Calu3 (cell line): ENCODE measurements at regions of chr12 and their contacts with region 1.

Region 1: GRCh38 chr12:108722992-108723766 is 8.1 kb downstream of the CORO1C start:
- DNase-seq: no peak
- H3K4me3 Mint-ChIP-seq: peak overlapping the region; percentile 57
- H3K27ac Mint-ChIP-seq: peak overlapping the region; percentile 96
- H3K4me1 Mint-ChIP-seq: peaks cover 75% of the 10 kb centered on the region
- H3K27me3 Mint-ChIP-seq: no peaks in the 10 kb centered on the region
- CTCF ChIP-seq: no peak

Region 2: GRCh38 chr12:108418164-108418890 is 304.9 kb before region 1 on chr12:
- CTCF ChIA-PET with region 1: no interaction called
- intact Hi-C with region 1: no loop called
- DNase-seq: no peak
- H3K4me3 Mint-ChIP-seq: no peak overlapping the region
- H3K27ac Mint-ChIP-seq: no peak overlapping the region
- H3K4me1 Mint-ChIP-seq: no peaks in the 10 kb centered on the region
- H3K27me3 Mint-ChIP-seq: peaks cover 22% of the 10 kb centered on the region
- CTCF ChIP-seq: no peak

Region 3: DNA sequence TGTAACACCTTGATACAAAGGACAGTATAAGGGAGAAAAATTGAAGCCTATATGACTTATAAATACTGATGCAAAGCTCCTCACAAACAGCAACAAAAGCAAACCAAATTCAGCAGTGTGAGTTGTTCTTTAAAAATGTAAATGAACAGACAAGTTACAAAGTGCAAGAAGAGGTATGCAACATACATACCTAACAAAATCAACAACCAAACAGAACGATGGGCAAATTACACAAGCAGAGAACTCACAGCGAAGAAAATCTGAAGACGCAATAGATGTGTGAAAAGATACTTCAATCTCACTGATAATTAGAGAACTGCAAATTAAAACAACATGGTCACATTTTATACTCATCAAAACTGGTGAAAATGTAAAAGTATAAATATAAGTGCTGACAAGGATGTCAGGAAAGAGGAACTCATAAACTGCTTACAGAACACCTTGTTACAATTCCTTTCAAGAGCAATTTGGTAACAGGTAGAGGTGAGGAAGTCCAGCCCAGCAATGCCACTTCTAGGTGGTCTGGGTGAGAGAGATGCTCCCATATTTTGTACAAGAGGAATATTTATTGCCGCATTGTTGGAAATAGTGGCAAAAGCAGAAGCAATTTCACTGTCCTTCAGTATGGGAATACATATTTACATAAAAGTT is 39.1 kb before region 1 on chr12:
- CTCF ChIA-PET with region 1: no interaction called
- intact Hi-C with region 1: loop called (anchors 5 kb)
- DNase-seq: no peak
- H3K4me3 Mint-ChIP-seq: no peak overlapping the region
- H3K27ac Mint-ChIP-seq: no peak overlapping the region
- H3K4me1 Mint-ChIP-seq: peaks cover 42% of the 10 kb centered on the region
- H3K27me3 Mint-ChIP-seq: no peaks in the 10 kb centered on the region
- CTCF ChIP-seq: no peak

Region 4: GRCh38 chr12:108691175-108691997 is 31.8 kb before region 1 on chr12:
- CTCF ChIA-PET with region 1: interaction called, 4 read pairs
- intact Hi-C with region 1: loop called (anchors 2 kb)
- DNase-seq: peak; percentile 86
- H3K4me3 Mint-ChIP-seq: peak overlapping the region; percentile 51
- H3K27ac Mint-ChIP-seq: peak overlapping the region; percentile 77
- H3K4me1 Mint-ChIP-seq: peaks cover 61% of the 10 kb centered on the region
- H3K27me3 Mint-ChIP-seq: no peaks in the 10 kb centered on the region
- CTCF ChIP-seq: peak; percentile 24

Region 5: DNA sequence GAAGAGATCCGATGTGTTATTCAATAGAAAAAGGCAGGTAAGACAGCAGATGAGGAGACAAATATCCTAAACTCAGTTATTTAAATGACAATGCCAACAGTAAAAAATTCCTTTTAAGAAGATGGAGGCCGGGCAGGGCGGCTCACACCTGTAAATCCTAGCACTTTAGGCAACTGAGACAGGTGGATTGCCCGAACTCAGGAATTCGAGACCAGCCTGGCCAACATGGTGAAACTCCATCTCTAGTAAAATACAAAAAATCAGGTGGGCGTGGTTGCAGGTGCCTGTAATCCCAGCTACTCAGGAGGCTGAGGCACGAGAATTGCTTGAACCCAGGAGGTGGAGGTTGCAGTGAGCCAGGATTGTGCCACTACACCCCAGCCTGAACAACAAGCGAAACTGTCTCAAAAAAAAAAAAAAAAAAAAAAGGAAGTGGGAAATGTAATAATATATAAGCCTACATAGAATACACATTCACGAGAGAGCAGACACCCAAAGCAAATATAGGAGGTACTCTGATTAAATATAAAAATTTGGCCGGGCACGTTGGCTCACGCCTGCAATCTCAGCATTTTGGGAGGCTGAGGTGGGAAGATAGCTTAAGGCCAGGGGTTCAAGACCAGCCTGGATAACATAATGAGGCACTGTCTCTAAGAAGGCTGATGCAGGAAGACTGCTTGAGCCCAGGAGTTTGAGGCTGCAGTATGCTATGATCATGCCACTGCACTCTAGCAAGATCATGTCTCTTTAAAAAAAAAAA is 10.8 kb before region 1 on chr12:
- CTCF ChIA-PET with region 1: no interaction called
- intact Hi-C with region 1: no loop called
- DNase-seq: no peak
- H3K4me3 Mint-ChIP-seq: no peak overlapping the region
- H3K27ac Mint-ChIP-seq: no peak overlapping the region
- H3K4me1 Mint-ChIP-seq: peaks cover 17% of the 10 kb centered on the region
- H3K27me3 Mint-ChIP-seq: no peaks in the 10 kb centered on the region
- CTCF ChIP-seq: no peak

Region 6: GRCh38 chr12:108850854-108851573 is 127.8 kb after region 1 on chr12:
- CTCF ChIA-PET with region 1: no interaction called
- intact Hi-C with region 1: no loop called
- DNase-seq: no peak
- H3K4me3 Mint-ChIP-seq: no peak overlapping the region
- H3K27ac Mint-ChIP-seq: no peak overlapping the region
- H3K4me1 Mint-ChIP-seq: peaks cover 31% of the 10 kb centered on the region
- H3K27me3 Mint-ChIP-seq: no peaks in the 10 kb centered on the region
- CTCF ChIP-seq: no peak